ENCODE measurements at regions of chrX and their contacts with region 1.

Region 1: GRCh38 chrX:128975745-128976144 is 547.5 kb downstream of the SMARCA1 start:
- DNase-seq: peak; percentile 31 to 83
- H3K4me3 ChIP-seq: no peak overlapping the region
- H3K27ac ChIP-seq: no peak overlapping the region
- H3K4me1 ChIP-seq: peaks cover 0 to 3% (median 1%) of the 10 kb centered on the region in 4 experiments; a peak in 2 of 7 replicates
- H3K27me3 ChIP-seq: no peaks in the 10 kb centered on the region
- CTCF ChIP-seq: peak; percentile 67 to 83 (median 71)
- EP300 ChIP-seq: no peak
- POLR2A ChIP-seq: no peak
- RAD21 ChIP-seq: peak; percentile 86 to 89

Region 2: DNA sequence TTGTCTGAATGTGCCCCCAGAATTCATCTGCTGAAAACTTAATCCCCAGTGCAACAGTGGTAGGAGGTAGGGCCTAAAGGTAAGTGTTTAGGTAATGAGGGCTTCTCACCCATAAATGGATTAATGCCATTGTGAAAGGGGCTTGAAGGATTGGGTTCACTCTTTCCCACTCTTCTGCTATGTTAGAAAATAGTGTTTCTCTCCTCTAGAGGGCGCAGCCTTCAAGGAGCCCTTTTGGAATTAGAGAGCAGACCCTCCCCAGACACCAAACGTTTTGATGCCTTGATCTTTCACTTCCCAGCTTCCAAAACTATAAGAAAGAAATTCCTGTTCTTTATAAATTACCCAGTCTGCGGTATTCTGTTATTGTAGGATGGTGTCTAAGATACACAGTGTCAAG is 158.8 kb before region 1 on chrX:
- CTCF ChIA-PET with region 1: interaction called, 24 read pairs
- POLR2A ChIA-PET with region 1: no interaction called
- DNase-seq: no peak
- H3K4me3 ChIP-seq: no peak overlapping the region
- H3K27ac ChIP-seq: no peak overlapping the region
- H3K4me1 ChIP-seq: no peaks in the 10 kb centered on the region
- H3K27me3 ChIP-seq: no peaks in the 10 kb centered on the region
- CTCF ChIP-seq: peak in 2 of 3 experiments; percentile 38 to 52; a peak in 2 of 4 replicates
- EP300 ChIP-seq: no peak
- POLR2A ChIP-seq: no peak
- RAD21 ChIP-seq: peak; percentile 55 to 60

Region 3: GRCh38 chrX:129116676-129117470 is 141.1 kb after region 1 on chrX:
- CTCF ChIA-PET with region 1: interaction called, 11 read pairs
- POLR2A ChIA-PET with region 1: no interaction called
- DNase-seq: no peak
- H3K4me3 ChIP-seq: no peak overlapping the region
- H3K27ac ChIP-seq: no peak overlapping the region
- H3K4me1 ChIP-seq: no peaks in the 10 kb centered on the region
- H3K27me3 ChIP-seq: no peaks in the 10 kb centered on the region
- CTCF ChIP-seq: no peak; a peak in 1 of 4 replicates
- EP300 ChIP-seq: no peak
- POLR2A ChIP-seq: no peak
- RAD21 ChIP-seq: peak; percentile 27 to 50; a peak in 3 of 4 replicates